Left cardiac atrium (tissue), 4 donors: ENCODE measurements at regions of chr22 and their contacts with region 1.

Region 1: GRCh38 chr22:36977947-36978660 is 41.1 kb downstream of the TST start:
- DNase-seq: peak; percentile 92
- ATAC-seq: peak; percentile 98

Region 2: GRCh38 chr22:36781656-36782627 is 196.2 kb before region 1 on chr22:
- intact Hi-C with region 1: loop called (anchors 2 to 5 kb)
- DNase-seq: peak; percentile 82
- ATAC-seq: peak; percentile 91 to 94

Region 3: GRCh38 chr22:36873680-36874537 is 104.2 kb before region 1 on chr22:
- intact Hi-C with region 1: loop called (anchors 5 to 10 kb)
- DNase-seq: peak; percentile 39
- ATAC-seq: peak; percentile 84 to 87